ENCODE measurements at regions of chr17 and their contacts with region 1.

Region 1: DNA sequence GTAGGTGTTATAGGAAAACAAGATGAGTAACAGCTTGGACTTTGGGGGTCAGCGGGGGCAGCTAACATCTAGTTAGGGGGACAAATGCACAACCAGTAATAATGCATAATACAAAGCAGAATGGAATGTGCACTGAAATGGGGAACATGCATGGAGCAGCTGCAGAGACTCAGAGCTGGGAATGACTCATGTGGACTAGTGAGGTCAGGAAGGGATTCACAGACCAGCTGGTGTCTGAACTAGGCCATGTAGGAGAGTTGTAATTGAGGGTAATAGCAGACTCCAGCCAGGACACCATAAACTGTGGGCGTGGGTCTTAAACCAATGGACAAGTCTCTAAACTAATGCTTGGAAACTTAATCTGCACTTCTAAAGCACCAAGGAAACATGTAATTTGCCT is 176.8 kb upstream of the ASIC2 start:
- DNase-seq: no peak
- ATAC-seq: no peak
- H3K4me3 Mint-ChIP-seq: no peak overlapping the region
- H3K27ac Mint-ChIP-seq: no peak overlapping the region
- H3K4me1 Mint-ChIP-seq: no peaks in the 10 kb centered on the region
- H3K27me3 Mint-ChIP-seq: peaks cover 5% of the 10 kb centered on the region
- CTCF ChIP-seq: no peak

Region 2: GRCh38 chr17:33284022-33284421 is 185.9 kb before region 1 on chr17:
- CTCF ChIA-PET with region 1: no interaction called
- POLR2A ChIA-PET with region 1: no interaction called
- intact Hi-C with region 1: no loop called
- DNase-seq: no peak
- ATAC-seq: no peak
- H3K4me3 Mint-ChIP-seq: no peak overlapping the region
- H3K27ac Mint-ChIP-seq: no peak overlapping the region
- H3K4me1 Mint-ChIP-seq: no peaks in the 10 kb centered on the region
- H3K27me3 Mint-ChIP-seq: peaks cover 6% of the 10 kb centered on the region
- CTCF ChIP-seq: no peak

Region 3: DNA sequence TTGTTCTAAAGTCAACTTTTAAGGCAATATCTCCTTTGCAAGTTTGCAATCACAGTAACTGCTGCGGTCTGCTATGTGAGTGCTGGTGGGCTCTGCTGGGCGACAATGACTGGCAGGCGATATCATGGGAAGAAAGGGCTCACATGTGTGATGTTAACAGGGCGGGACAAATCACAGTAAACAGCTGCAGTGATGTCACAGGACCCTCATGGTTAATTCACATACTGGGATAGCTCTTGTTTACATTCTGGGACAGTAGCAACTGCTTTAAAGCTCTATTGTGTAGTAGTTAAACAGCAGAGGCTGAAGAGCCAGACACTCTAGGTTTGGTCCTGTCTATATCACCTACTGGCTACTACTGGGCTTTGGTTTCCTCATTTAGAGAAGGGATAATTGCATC is 80.3 kb after region 1 on chr17:
- CTCF ChIA-PET with region 1: no interaction called
- POLR2A ChIA-PET with region 1: no interaction called
- intact Hi-C with region 1: loop called (anchors 10 kb)
- DNase-seq: no peak
- ATAC-seq: no peak
- H3K4me3 Mint-ChIP-seq: no peak overlapping the region
- H3K27ac Mint-ChIP-seq: no peak overlapping the region
- H3K4me1 Mint-ChIP-seq: no peaks in the 10 kb centered on the region
- H3K27me3 Mint-ChIP-seq: peaks cover 6% of the 10 kb centered on the region
- CTCF ChIP-seq: no peak

Region 4: DNA sequence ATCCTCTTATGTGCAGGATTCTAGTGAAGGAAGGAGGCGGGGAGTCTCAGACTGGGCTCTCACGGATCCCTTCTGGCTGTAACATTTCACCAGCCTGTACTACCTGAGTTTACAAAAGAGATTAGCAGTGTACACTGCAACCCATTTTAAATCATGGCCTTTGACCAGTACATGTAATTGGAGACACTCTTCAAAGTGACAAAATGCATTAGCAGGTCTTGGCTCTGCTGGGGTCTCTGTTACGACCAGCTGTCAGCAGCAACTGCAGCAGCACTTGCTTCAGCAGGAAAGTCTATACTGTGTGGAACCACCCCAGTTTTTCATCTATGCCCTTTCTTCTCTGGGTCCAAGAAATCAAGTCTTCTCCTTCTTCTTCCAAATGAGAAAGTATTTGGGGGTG is 145.9 kb after region 1 on chr17:
- CTCF ChIA-PET with region 1: no interaction called
- POLR2A ChIA-PET with region 1: no interaction called
- intact Hi-C with region 1: no loop called
- DNase-seq: no peak
- ATAC-seq: no peak
- H3K4me3 Mint-ChIP-seq: no peak overlapping the region
- H3K27ac Mint-ChIP-seq: no peak overlapping the region
- H3K4me1 Mint-ChIP-seq: no peaks in the 10 kb centered on the region
- H3K27me3 Mint-ChIP-seq: peaks cover 2% of the 10 kb centered on the region
- CTCF ChIP-seq: no peak